Left colon (tissue), 2 donors: ENCODE measurements at regions of chrX and their contacts with region 1.

Region 1: GRCh38 chrX:104136241-104137019 is 20.4 kb downstream of the SLC25A53 start:
- DNase-seq: peak; percentile 48 to 69
- ATAC-seq: peak; percentile 86

Region 2: GRCh38 chrX:104098151-104098808 is 38.1 kb before region 1 on chrX:
- intact Hi-C with region 1: loop called in 1 of 2 experiments (anchors 2 kb)
- DNase-seq: peak in 1 of 2 donors; percentile 35
- ATAC-seq: peak; percentile 86